H1 (cell line): ENCODE measurements at regions of chr19 and their contacts with region 1.

Region 1: DNA sequence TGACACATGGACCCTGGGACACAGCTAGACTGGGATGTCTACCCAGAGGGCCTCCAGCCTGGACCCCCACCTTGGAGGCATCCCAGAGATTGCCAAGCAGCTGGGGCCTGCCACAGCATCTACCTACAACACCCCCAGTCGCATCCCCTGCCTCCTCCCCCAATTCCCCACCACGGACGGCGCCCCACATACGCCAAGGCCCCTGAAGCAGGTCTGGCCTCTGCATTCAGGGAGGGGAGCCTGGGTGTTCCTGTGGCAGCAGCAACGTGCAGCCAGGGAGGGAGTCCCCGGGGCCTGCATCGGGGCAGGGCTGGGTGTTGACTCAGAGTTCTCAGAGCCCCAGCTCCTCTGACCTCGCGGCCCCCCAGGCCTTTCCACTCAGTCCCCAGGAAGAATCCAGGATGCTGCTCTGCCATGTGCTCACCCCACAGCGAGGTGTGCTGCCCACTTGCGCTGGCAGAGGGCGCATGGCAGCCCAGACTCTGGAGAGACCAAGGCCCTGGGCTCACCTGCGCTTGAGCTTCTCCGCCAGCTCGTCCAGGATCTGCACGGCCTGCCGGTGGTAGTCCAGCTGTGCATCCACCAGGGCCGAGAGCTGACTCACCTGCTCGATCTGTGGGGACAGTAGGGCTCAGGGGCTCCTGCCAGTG is 19.6 kb downstream of the MPND start:
- DNase-seq: peak in 1 of 2 experiments; percentile 76
- H3K4me3 ChIP-seq: no peak overlapping the region
- H3K27ac ChIP-seq: no peak overlapping the region
- H3K4me1 ChIP-seq: peaks cover 0 to 13% (median 2%) of the 10 kb centered on the region in 4 experiments; a peak in 3 of 7 replicates
- H3K27me3 ChIP-seq: no peaks in the 10 kb centered on the region
- CTCF ChIP-seq: peak; percentile 60 to 77 (median 67)
- EP300 ChIP-seq: no peak
- POLR2A ChIP-seq: 0 out of 3 replicates have a peak, but pooled peaks of 1 of the 2 experiments have one; percentile 45
- RAD21 ChIP-seq: peak; percentile 51 to 58

Region 2: DNA sequence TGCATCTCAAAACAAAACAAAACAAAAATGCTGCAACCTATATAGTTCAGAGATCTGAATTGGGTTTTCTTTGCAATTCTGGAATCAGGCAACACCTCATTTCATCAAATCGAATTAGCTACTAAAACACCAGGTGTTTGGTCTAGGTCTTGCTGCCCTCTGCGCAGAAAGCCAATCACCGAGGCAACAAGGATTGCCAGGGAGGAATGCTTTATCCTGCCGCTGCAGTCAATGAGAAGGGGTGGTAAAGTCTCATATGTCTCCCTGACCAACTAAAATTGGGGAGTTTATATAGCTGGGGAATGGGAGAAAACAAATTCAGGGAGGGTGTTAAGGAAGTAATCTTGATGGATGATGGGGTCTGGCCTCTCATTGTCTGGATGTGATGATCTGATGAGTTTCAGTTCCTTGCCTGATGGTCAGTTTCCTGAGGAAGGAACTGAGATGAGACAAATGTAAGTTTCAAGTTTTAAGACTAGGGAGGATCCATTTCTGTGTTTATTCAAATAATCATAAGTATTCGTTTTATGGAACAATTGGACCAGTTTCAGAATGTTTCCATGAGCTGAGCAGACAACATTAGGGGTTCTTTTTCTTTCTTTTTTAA is 121.1 kb before region 1 on chr19:
- CTCF ChIA-PET with region 1: no interaction called
- POLR2A ChIA-PET with region 1: no interaction called
- DNase-seq: no peak
- H3K4me3 ChIP-seq: no peak overlapping the region
- H3K27ac ChIP-seq: no peak overlapping the region
- H3K4me1 ChIP-seq: no peaks in the 10 kb centered on the region
- H3K27me3 ChIP-seq: no peaks in the 10 kb centered on the region; a peak in 1 of 7 replicates
- CTCF ChIP-seq: no peak
- EP300 ChIP-seq: no peak
- POLR2A ChIP-seq: no peak
- RAD21 ChIP-seq: no peak

Region 3: DNA sequence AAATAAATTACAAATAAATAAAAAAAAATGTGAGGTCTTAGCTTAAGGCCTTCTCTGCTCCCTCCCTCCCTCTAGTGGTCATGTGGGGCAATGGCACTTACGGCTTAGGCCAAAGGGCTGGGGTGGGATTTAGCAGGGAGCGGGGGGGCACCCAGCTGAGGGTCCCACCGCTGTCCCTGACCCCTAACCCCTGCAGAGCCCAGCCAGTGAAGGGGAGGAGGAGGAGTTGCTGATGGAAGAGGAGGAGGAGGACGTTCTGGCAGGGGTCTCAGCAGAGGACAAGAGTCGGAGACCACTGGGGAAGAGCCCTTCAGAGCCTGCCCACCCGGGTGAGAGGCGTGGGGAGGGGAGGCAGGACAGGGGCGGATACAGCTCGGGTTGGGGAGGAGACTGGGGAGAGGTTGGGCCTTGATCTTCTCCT is 10.3 kb before region 1 on chr19:
- CTCF ChIA-PET with region 1: interaction called, 42 read pairs
- POLR2A ChIA-PET with region 1: interaction called, 14 read pairs
- DNase-seq: peak in 1 of 2 experiments; percentile 83
- H3K4me3 ChIP-seq: no peak overlapping the region
- H3K27ac ChIP-seq: no peak overlapping the region
- H3K4me1 ChIP-seq: peaks cover 0 to 2% (median 0%) of the 10 kb centered on the region in 4 experiments; a peak in 1 of 7 replicates
- H3K27me3 ChIP-seq: no peaks in the 10 kb centered on the region
- CTCF ChIP-seq: peak; percentile 67 to 79 (median 75)
- EP300 ChIP-seq: no peak
- POLR2A ChIP-seq: no peak
- RAD21 ChIP-seq: peak; percentile 56 to 64; a peak in 3 of 4 replicates